ENCODE measurements at regions of chr2 and their contacts with region 1.

Region 1: DNA sequence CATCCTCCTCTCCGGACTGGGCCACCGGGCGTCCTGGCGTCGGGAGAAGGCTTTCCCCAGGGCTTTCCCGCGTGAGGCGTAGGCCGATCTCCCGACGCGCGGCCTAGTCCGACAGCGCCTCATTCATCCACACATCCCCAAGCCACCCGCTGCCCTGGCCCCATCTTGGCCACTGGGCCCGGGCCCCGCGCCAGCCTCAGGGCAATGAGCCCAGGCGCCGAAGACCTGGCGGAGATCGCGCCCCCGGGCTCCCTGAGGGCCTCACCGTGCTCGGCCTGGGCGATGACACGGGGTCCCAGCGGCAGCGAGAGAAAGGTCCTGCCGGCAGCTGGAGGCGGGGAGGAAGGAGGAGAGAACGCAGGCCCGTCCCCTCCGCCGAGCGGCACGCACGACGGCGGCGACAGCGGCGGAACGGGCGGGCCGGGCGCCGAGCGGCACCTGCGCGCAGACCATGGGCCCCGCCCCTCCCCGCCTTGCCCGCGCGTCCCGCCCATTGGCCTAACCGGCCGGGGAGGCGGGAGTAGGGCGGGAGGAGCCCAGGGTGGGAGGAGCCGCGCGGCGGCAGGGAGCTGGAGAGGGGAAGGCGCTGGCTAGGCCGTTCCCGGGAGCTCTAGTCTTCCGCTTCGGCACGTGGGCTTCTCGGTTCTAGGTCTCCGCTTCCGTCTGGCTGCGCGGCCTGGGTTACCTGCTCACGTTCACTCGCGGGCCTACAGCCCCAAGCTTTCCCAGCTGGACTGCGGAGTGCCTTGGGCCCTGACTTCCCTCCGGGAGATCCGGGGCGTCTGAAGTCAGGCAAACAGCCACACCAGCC is at the start of gene OLA1:
- DNase-seq: peak; percentile 99
- H3K4me3 Mint-ChIP-seq: peak within 1 kb of the TSS; percentile 88
- H3K27ac Mint-ChIP-seq: peak within 1 kb of the TSS; percentile 90
- H3K4me1 Mint-ChIP-seq: peaks cover 25% of the 10 kb centered on the region
- H3K27me3 Mint-ChIP-seq: peaks cover 2% of the 10 kb centered on the region
- total RNA-seq, gene OLA1: 164 and 167 TPM in 2 replicates

Region 2: GRCh38 chr2:173264603-173265366 is 983.6 kb before region 1 on chr2:
- intact Hi-C with region 1: no loop called
- DNase-seq: peak; percentile 70
- H3K4me3 Mint-ChIP-seq: peak overlapping the region; percentile 32
- H3K27ac Mint-ChIP-seq: peak overlapping the region; percentile 0
- H3K4me1 Mint-ChIP-seq: peaks cover 12% of the 10 kb centered on the region
- H3K27me3 Mint-ChIP-seq: no peaks in the 10 kb centered on the region

Region 3: DNA sequence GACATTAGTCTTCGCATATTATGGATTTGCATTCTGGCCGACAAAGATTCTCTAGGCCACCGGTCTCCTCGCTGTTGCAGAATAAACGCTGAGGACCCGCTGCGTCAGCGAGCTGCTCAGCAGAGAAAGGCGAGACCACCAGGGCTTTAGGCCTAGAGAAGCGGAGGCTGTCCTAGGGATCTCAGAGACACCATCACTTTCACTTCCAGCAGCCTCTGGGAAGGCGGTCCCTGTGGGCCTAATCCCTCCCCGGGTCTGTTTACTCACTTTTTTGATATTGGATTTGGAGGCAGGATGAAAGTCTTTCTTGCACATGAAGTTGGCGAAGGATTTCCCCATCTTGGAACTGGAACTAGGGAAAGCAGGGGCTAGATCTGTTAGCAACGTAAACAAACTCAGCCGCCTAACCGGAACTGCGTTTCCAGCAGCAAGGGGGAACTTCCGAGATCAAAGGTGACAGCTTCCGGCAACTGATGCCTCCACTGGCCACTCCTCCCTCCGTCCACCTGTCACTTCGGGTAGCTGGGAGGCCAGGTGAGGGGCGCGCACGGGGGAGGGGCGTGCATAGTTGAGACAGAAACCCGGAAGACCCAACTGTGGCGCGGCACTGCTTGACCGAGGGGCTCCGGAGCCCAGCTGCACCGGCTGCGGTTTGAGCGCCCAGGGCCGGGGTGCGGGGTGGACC is 147.0 kb after region 1 on chr2 and contains the start of gene SCRN3:
- intact Hi-C with region 1: loop called (anchors 2 kb)
- DNase-seq: peak; percentile 94
- H3K4me3 Mint-ChIP-seq: peak within 1 kb of the TSS; percentile 99
- H3K27ac Mint-ChIP-seq: peak within 1 kb of the TSS; percentile 99
- H3K4me1 Mint-ChIP-seq: peaks cover 30% of the 10 kb centered on the region
- H3K27me3 Mint-ChIP-seq: no peaks in the 10 kb centered on the region
- total RNA-seq, gene SCRN3: 18.2 and 19.0 TPM in 2 replicates